Mammary epithelial cell (primary cell): ENCODE measurements at regions of chr15 and their contacts with region 1.

Region 1: GRCh38 chr15:91942676-91943576 is 89.4 kb downstream of the SLCO3A1 start:
- DNase-seq: peak; percentile 99
- H3K4me3 ChIP-seq: peak overlapping the region in 1 of 3 experiments; percentile 5
- H3K27ac ChIP-seq: peak overlapping the region; percentile 96
- H3K4me1 ChIP-seq: peaks cover 58% of the 10 kb centered on the region
- H3K27me3 ChIP-seq: no peaks in the 10 kb centered on the region
- CTCF ChIP-seq: no peak

Region 2: GRCh38 chr15:91894606-91895005 is 48.3 kb before region 1 on chr15:
- CTCF ChIA-PET with region 1: interaction called, 6 read pairs
- dilution Hi-C with region 1: no loop called
- in situ Hi-C with region 1: loop called in 1 of 2 experiments (anchors 5 kb)
- intact Hi-C with region 1: loop called (anchors 5 kb)
- DNase-seq: peak; percentile 98
- H3K4me3 ChIP-seq: no peak overlapping the region
- H3K27ac ChIP-seq: peak overlapping the region; percentile 91
- H3K4me1 ChIP-seq: peaks cover 63% of the 10 kb centered on the region
- H3K27me3 ChIP-seq: no peaks in the 10 kb centered on the region
- CTCF ChIP-seq: no peak

Region 3: DNA sequence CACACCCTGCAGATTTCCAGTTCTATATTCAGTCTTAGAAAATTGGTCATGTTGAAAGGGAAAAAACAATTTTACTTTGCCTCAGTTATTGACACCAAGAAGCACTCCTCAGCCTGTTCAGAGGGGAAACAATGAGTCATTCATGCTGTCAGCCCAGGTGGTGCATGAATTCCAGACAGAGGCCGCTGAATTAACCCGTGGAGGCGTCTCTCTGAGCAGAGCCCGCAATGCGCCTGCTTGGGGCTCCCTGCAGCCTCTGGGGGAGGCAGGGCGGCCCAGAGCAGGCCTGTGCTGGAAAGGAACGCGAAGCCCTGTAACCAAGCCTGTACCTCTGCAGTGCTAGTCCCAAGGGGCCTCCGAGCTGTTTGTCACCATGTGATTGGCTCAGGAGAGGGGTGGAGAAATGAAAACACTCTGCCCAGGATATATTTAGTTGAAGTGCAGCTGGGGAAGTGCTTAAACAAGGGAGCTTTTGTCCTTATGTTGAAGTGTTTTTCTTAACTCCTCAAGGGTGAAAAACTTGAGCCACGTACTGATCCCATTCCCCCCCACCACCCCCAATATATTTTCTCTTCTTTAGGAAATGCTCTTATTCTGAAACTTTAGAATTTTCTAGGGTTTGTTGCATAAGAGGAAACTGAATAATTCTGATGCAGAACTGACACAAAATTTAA is 888.9 kb after region 1 on chr15:
- CTCF ChIA-PET with region 1: no interaction called
- dilution Hi-C with region 1: no loop called
- in situ Hi-C with region 1: no loop called
- intact Hi-C with region 1: no loop called
- DNase-seq: peak; percentile 99
- H3K4me3 ChIP-seq: peak overlapping the region in 2 of 3 experiments; percentile 18 to 40
- H3K27ac ChIP-seq: peak overlapping the region; percentile 87
- H3K4me1 ChIP-seq: peaks cover 21% of the 10 kb centered on the region
- H3K27me3 ChIP-seq: no peaks in the 10 kb centered on the region
- CTCF ChIP-seq: no peak